GM18951 (cell line): ENCODE measurements at regions of chr2 and their contacts with region 1.

Region 1: GRCh38 chr2:26922405-26923188 is 47.8 kb upstream of the MAPRE3 start:
- POLR2A ChIP-seq: no peak

Region 2: DNA sequence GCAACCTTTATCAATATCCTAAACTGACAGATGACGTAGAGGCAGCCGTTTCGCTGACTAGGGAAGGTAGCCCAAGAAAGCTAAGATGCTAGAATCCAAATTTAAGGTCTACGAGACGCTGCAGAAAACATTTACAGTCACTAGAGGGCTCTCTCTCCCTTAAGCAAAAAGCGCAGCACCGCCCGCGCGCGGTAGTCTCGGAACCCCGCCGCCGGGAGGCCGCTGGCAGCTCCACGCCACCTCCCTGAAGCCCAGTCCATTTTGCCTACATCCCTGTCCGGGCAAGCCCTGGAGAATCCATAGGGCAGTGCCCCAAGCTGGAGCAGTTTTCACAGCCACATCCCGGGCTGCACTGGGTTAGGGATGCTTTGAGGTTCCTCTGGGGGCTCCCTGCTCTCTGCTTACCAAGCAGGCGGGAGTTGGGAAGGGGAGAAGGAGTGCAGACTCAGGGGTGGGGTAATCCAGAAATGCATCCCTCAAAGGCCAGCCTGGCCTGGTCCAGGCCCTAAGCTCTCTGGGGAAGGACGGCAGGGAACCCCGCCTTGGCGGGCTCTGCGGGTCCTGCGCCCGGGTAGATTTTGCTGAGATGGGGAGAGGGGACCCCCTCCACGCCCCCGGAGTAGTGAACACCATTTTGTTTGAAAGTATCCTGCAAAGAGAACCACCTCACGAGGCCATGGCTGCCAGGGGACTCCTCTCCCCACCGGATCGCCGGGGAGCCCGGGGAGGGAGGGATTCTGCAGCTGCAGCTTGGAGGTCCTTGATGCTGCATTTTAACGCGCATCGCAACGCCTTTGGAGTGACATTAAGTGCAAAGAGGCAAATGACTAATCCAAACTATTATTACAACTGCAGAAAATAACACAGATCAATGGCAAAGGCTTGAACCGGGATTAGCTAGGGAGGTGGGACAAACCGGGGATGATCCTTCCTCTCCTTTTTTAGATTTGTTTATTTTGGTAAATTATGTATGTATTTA is 76.0 kb before region 1 on chr2:
- in situ Hi-C with region 1: loop called (anchors 10 kb)
- POLR2A ChIP-seq: no peak

Region 3: GRCh38 chr2:27217217-27218121 is 294.9 kb after region 1 on chr2 and contains the start of gene CAD:
- in situ Hi-C with region 1: no loop called
- POLR2A ChIP-seq: peak; percentile 85